B cell (primary cell): ENCODE measurements at regions of chr10 and their contacts with region 1.

Region 1: DNA sequence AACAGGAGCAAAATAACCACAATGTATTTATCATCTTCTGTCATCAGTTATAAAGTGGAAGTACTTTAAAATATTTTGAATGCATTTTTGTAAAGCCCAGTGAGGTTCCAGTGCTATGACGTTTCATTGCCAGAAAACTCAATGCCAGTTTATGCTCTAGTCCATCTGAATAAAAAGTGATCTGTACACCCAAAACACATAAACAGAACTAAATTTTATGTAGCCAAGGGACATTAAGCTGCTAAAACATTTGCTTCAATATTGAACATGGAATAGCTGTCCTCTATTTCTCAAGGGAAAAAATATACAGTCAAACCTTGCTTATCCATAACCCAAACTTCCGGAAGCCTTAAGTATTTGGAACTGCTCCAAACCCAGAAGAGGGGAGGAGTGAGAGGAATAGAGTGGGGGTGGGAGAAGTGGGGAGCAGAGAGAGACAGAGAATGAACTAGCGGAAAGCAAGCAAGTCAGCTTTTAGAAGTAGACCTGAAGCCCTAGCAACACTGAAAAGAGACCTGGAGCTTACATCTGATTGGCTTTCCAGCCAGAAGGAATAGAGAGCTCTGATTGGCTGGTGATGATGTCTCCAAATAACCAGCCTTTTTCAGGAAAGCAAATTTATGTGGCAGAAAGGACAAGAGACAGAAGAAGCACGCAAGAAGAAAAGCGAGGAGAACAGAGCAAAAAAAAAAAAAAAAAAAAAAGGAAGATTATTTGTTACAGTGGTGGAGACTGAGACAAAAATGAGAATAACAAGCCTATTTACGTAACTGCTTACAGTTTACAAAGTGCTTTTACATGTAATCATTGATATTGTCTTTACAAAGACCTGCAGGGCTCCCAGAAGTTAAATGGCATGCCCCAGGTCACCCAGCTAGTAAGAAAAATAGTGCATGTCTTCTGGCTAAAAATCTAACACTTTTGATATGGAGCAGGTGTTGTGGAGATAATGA is 196.0 kb downstream of the RNLS start:
- DNase-seq: peak; percentile 69
- ATAC-seq: peak; percentile 44
- H3K4me3 ChIP-seq: peak overlapping the region in 4 of 5 experiments; percentile 10 to 59 (median 38)
- H3K4me3 Mint-ChIP-seq: no peak overlapping the region
- H3K27ac ChIP-seq: peak overlapping the region; percentile 97 to 99
- H3K27ac Mint-ChIP-seq: no peak overlapping the region
- H3K4me1 ChIP-seq: peaks cover 70 to 77% of the 10 kb centered on the region in 2 donors
- H3K4me1 Mint-ChIP-seq: peaks cover 32% of the 10 kb centered on the region
- H3K27me3 ChIP-seq: no peaks in the 10 kb centered on the region
- H3K27me3 Mint-ChIP-seq: no peaks in the 10 kb centered on the region
- CTCF ChIP-seq: no peak

Region 2: GRCh38 chr10:87817609-87818504 is 569.2 kb before region 1 on chr10 and contains the start of gene ATAD1:
- CTCF ChIA-PET with region 1: interaction called, 10 read pairs
- POLR2A ChIA-PET with region 1: no interaction called
- intact Hi-C with region 1: loop called (anchors 2 kb)
- DNase-seq: peak; percentile 93
- ATAC-seq: peak; percentile 81
- H3K4me3 ChIP-seq: peak within 1 kb of the TSS; percentile 84 to 93 (median 87)
- H3K4me3 Mint-ChIP-seq: peak within 1 kb of the TSS; percentile 96
- H3K27ac ChIP-seq: peak within 1 kb of the TSS; percentile 91 to 95
- H3K27ac Mint-ChIP-seq: peak within 1 kb of the TSS; percentile 97
- H3K4me1 ChIP-seq: peaks cover 15 to 25% of the 10 kb centered on the region in 2 donors
- H3K4me1 Mint-ChIP-seq: peaks cover 37% of the 10 kb centered on the region
- H3K27me3 ChIP-seq: no peaks in the 10 kb centered on the region
- H3K27me3 Mint-ChIP-seq: no peaks in the 10 kb centered on the region
- CTCF ChIP-seq: peak; percentile 16
- total RNA-seq, gene ATAD1: 41.5 and 44.9 TPM in 2 replicates

Region 3: DNA sequence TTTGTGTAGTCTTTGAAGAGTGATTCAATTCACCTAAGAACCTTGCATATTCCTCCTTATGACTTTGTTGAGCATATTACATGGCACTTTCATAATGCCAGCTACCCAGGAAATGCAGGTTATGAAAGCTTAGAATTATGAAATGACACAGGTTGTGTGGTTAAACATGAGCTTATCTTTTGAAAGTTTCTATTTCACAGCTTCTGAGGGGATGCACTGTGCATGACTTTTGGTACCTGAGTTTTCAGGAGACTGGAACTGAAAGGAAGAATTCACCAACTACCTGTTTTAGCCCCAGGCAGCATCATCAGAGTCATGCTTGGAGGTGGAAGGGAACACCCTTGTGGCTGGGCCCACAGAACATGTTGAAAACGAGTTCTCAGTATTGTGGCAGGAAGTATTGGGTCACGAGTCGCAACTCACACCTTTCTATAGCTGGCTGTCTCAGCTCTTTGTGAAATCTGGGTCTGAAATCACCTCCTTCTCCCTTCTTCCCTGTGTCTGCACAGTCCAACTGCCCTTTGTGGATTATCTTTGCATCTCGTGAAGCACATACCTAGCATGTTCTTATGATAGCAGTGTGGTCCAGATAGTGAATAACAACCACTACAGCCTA is 295.5 kb before region 1 on chr10:
- CTCF ChIA-PET with region 1: interaction called, 12 read pairs
- POLR2A ChIA-PET with region 1: no interaction called
- intact Hi-C with region 1: no loop called
- DNase-seq: peak; percentile 81
- ATAC-seq: peak; percentile 86
- H3K4me3 ChIP-seq: no peak overlapping the region
- H3K4me3 Mint-ChIP-seq: no peak overlapping the region
- H3K27ac ChIP-seq: peak overlapping the region; percentile 39 to 57
- H3K27ac Mint-ChIP-seq: peak overlapping the region; percentile 79
- H3K4me1 ChIP-seq: peaks cover 28 to 29% of the 10 kb centered on the region in 2 donors
- H3K4me1 Mint-ChIP-seq: peaks cover 37% of the 10 kb centered on the region
- H3K27me3 ChIP-seq: no peaks in the 10 kb centered on the region
- H3K27me3 Mint-ChIP-seq: no peaks in the 10 kb centered on the region
- CTCF ChIP-seq: no peak

Region 4: GRCh38 chr10:88114368-88114767 is 272.7 kb before region 1 on chr10:
- CTCF ChIA-PET with region 1: interaction called, 111 read pairs
- POLR2A ChIA-PET with region 1: interaction called, 7 read pairs
- intact Hi-C with region 1: no loop called
- DNase-seq: peak; percentile 68
- ATAC-seq: peak; percentile 41
- H3K4me3 ChIP-seq: no peak overlapping the region
- H3K4me3 Mint-ChIP-seq: peak overlapping the region; percentile 66
- H3K27ac ChIP-seq: peak overlapping the region; percentile 48 to 58
- H3K27ac Mint-ChIP-seq: peak overlapping the region; percentile 86
- H3K4me1 ChIP-seq: peaks cover 91 to 94% of the 10 kb centered on the region in 2 donors
- H3K4me1 Mint-ChIP-seq: peaks cover 57% of the 10 kb centered on the region
- H3K27me3 ChIP-seq: no peaks in the 10 kb centered on the region
- H3K27me3 Mint-ChIP-seq: no peaks in the 10 kb centered on the region
- CTCF ChIP-seq: peak; percentile 48

Region 5: DNA sequence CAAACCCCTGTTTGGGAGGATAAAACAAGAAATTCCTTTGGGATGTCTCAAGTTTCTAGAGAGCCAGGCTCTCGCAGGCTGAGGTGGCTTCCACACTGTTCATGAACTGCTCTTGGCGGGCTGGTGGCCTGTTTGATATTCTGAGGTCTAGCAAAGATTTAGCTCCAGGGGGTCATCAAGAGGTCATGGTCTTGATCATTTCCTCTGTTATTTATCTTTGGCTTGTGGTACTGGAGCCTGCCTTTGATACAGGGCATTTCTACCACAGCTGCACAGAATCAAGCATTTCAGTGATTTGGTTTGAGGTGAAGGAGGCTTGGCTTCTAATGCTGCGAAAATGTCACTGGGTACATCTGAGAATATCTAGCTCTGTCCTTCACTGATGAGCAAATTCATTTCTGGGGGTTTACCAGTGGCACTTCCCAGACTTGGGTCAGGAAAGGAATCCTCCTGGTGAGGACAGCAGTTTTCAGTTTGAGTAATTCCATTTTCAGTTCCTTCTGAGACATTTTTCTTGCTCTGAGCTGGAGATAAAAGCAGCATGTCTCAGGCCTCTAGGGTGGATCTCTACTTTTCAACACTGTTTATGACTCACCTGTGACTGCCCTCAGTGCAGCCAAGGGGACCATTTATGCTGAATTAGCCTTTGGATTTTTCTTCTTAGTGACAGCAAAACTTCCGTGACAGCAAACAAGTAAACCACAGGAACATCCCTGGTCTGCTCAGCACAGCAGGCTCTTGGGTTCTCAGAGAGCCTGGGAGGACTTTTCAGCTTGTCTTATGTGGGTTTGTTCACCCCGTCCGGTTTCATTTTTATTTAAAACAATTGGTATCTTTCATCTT is 116.0 kb before region 1 on chr10:
- CTCF ChIA-PET with region 1: interaction called, 3 read pairs
- POLR2A ChIA-PET with region 1: no interaction called
- intact Hi-C with region 1: loop called (anchors 5 kb)
- DNase-seq: peak; percentile 31
- ATAC-seq: peak; percentile 73
- H3K4me3 ChIP-seq: no peak overlapping the region
- H3K4me3 Mint-ChIP-seq: peak overlapping the region; percentile 58
- H3K27ac ChIP-seq: peak overlapping the region in 1 of 2 donors; percentile 52
- H3K27ac Mint-ChIP-seq: peak overlapping the region; percentile 75
- H3K4me1 ChIP-seq: peaks cover 24 to 31% of the 10 kb centered on the region in 2 donors
- H3K4me1 Mint-ChIP-seq: peaks cover 31% of the 10 kb centered on the region
- H3K27me3 ChIP-seq: no peaks in the 10 kb centered on the region
- H3K27me3 Mint-ChIP-seq: no peaks in the 10 kb centered on the region
- CTCF ChIP-seq: no peak

Region 6: GRCh38 chr10:88343761-88344484 is 43.2 kb before region 1 on chr10:
- CTCF ChIA-PET with region 1: interaction called, 10 read pairs
- POLR2A ChIA-PET with region 1: no interaction called
- intact Hi-C with region 1: no loop called
- DNase-seq: no peak
- ATAC-seq: no peak
- H3K4me3 ChIP-seq: no peak overlapping the region
- H3K4me3 Mint-ChIP-seq: no peak overlapping the region
- H3K27ac ChIP-seq: no peak overlapping the region
- H3K27ac Mint-ChIP-seq: no peak overlapping the region
- H3K4me1 ChIP-seq: peaks cover 4 to 26% of the 10 kb centered on the region in 2 donors
- H3K4me1 Mint-ChIP-seq: peaks cover 27% of the 10 kb centered on the region
- H3K27me3 ChIP-seq: no peaks in the 10 kb centered on the region
- H3K27me3 Mint-ChIP-seq: no peaks in the 10 kb centered on the region
- CTCF ChIP-seq: no peak

Region 7: DNA sequence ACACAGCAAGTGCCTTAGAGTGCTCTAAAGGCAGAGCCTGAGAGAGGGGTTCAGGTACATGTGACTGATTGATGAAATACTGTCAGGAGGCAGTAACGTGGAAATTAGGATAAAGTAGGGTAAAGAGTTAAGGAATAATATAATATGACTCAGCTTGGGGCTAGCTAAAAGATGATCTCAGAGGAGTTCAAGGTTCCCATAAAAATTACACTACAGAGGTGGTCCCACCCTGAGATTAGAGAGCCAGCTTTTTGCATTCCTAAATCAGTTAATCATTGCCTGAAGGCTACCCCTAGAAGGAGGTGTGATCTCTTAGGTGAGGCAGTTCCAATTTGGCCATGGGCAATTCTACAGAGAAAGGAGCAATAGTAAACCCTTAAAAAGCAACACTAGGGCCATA is 205.3 kb after region 1 on chr10:
- CTCF ChIA-PET with region 1: no interaction called
- POLR2A ChIA-PET with region 1: no interaction called
- intact Hi-C with region 1: no loop called
- DNase-seq: no peak
- ATAC-seq: no peak
- H3K4me3 ChIP-seq: no peak overlapping the region
- H3K4me3 Mint-ChIP-seq: no peak overlapping the region
- H3K27ac ChIP-seq: no peak overlapping the region
- H3K27ac Mint-ChIP-seq: no peak overlapping the region
- H3K4me1 ChIP-seq: no peaks in the 10 kb centered on the region
- H3K4me1 Mint-ChIP-seq: no peaks in the 10 kb centered on the region
- H3K27me3 ChIP-seq: no peaks in the 10 kb centered on the region
- H3K27me3 Mint-ChIP-seq: no peaks in the 10 kb centered on the region
- CTCF ChIP-seq: no peak

Region 8: DNA sequence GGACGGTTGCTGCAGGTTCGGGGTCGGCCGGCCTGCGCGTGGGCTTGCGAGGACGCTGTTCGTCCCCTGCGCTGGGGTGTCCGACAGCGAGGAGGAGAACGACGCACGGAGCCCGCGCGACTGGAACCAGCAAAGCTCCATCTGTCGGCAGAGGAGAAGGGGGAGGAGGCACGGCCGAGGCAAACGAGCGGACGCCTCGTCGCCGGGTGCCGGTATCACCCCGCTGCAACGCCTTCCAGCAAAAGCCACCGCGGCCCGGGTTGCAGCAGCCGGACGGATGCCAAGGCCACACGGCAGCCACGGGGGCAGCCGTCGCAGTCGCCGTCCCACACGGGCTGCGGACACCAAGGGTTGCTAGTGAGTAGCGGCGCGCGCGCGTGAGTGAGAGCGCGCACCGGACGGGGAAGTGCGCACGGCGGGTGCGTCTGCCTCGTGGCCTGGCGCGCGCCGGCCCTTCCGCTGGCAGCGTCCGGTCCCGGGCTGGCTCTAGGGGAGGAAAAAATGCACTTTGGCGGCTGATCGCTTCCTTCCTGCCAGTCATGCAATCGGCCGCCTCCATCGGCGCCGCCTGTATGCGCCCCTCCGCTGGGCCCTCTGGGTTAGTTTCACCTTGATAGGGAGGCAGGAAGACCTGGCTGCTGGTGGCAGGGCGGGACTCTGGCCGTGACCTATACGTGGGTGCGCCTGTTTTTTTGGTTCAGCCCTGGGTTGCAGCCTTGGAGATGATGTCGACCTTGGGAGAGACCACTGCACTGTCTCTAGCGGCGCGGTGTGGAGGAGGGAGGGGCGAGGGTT is 493.4 kb after region 1 on chr10:
- CTCF ChIA-PET with region 1: no interaction called
- POLR2A ChIA-PET with region 1: no interaction called
- intact Hi-C with region 1: loop called (anchors 5 kb)
- DNase-seq: peak; percentile 92
- ATAC-seq: peak; percentile 68
- H3K4me3 ChIP-seq: peak overlapping the region; percentile 50 to 84 (median 71)
- H3K4me3 Mint-ChIP-seq: peak overlapping the region; percentile 96
- H3K27ac ChIP-seq: peak overlapping the region; percentile 88 to 91
- H3K27ac Mint-ChIP-seq: peak overlapping the region; percentile 97
- H3K4me1 ChIP-seq: peaks cover 25 to 40% of the 10 kb centered on the region in 2 donors
- H3K4me1 Mint-ChIP-seq: peaks cover 57% of the 10 kb centered on the region
- H3K27me3 ChIP-seq: no peaks in the 10 kb centered on the region
- H3K27me3 Mint-ChIP-seq: no peaks in the 10 kb centered on the region
- CTCF ChIP-seq: peak; percentile 30